B cell (primary cell): ENCODE measurements at regions of chr3 and their contacts with region 1.

Region 1: DNA sequence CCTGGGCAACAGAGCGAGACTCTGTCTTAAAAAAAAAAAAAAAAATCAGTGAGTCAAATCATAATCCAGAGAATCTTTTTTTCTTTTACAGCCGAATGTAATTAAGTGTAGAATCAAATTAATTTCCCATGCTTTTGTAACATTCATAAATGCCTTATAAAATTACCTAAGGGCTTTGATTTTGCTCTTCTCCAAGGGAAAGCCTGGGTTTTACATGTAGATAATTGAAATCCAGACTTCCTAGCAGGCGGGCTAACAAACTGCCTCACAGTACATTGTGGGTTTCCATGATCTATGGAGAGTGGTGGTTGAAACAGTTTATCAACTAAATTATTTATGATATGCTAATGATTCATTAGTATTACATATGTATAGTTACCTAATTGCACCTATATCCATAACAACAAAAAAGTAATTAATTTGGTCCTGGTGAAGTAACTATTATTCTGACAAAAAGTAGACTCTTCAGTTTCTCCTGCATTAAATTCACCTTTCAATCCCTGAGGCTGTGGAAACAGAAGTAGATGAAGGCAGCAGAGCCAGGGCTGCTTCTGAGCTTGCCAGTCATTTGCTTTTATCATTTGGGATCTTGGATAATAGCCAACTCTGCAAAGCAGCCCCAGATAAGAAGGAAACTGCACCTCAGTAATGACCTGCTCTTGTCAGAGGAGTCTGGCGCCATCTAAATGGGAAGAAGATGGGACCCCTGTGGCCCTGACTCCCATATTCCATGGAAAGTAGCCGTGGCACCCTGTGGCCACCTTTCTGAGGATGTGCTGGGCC is 9.5 kb downstream of the CCR9 start:
- DNase-seq: no peak
- ATAC-seq: no peak
- H3K4me3 ChIP-seq: no peak overlapping the region
- H3K4me3 Mint-ChIP-seq: no peak overlapping the region
- H3K27ac ChIP-seq: no peak overlapping the region
- H3K27ac Mint-ChIP-seq: no peak overlapping the region
- H3K4me1 ChIP-seq: peaks cover 26 to 28% of the 10 kb centered on the region in 2 donors
- H3K4me1 Mint-ChIP-seq: peaks cover 40% of the 10 kb centered on the region
- H3K27me3 ChIP-seq: no peaks in the 10 kb centered on the region
- H3K27me3 Mint-ChIP-seq: no peaks in the 10 kb centered on the region
- CTCF ChIP-seq: no peak

Region 2: DNA sequence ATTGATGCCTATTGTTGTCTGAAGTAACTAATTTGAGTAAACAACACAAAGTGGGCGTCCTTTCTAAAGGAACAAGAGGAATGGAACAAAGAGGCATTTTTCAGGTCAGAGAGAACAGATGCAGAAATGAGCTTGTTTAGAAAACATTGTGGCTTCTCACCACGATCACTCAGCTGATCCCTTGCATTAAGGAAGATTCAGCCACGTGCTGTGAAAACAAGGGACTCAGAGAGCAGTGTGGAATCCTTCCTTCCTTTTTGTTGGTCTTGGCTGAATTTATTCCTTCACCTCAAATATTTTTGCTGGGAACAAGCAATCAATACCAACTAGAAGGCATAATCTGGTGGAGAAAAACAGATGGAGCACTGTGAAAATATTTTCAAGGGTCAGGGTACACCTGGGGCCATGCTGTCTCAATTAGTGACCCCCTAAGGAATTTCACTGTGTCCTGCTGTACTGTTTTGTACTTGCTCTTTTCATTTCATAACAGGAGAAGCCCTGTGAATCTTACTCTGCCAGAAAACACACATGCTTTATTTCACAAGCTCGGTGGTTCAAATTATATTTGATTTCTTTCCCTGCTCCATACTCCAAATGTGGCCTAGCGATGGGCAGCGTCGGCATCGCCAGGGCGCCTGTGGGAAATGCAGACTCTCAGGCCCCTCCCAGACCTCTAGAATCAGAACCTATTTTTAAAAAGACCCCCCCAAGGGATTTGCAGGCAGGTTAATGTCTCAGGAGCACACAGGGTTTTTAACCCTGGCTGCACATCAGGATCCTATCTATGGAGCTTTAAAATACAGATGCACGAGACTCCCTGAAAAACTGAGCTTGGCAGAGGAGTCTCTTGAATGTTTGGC is 88.0 kb before region 1 on chr3:
- CTCF ChIA-PET with region 1: no interaction called
- POLR2A ChIA-PET with region 1: no interaction called
- intact Hi-C with region 1: no loop called
- DNase-seq: no peak
- ATAC-seq: no peak
- H3K4me3 ChIP-seq: no peak overlapping the region
- H3K4me3 Mint-ChIP-seq: no peak overlapping the region
- H3K27ac ChIP-seq: no peak overlapping the region
- H3K27ac Mint-ChIP-seq: no peak overlapping the region
- H3K4me1 ChIP-seq: no peaks in the 10 kb centered on the region
- H3K4me1 Mint-ChIP-seq: no peaks in the 10 kb centered on the region
- H3K27me3 ChIP-seq: no peaks in the 10 kb centered on the region
- H3K27me3 Mint-ChIP-seq: no peaks in the 10 kb centered on the region
- CTCF ChIP-seq: no peak

Region 3: GRCh38 chr3:45906681-45907407 is 11.0 kb after region 1 on chr3:
- CTCF ChIA-PET with region 1: interaction called, 13 read pairs
- POLR2A ChIA-PET with region 1: no interaction called
- intact Hi-C with region 1: no loop called
- DNase-seq: no peak
- ATAC-seq: no peak
- H3K4me3 ChIP-seq: no peak overlapping the region
- H3K4me3 Mint-ChIP-seq: peak overlapping the region; percentile 42
- H3K27ac ChIP-seq: no peak overlapping the region
- H3K27ac Mint-ChIP-seq: peak overlapping the region; percentile 80
- H3K4me1 ChIP-seq: peaks cover 16 to 46% of the 10 kb centered on the region in 2 donors
- H3K4me1 Mint-ChIP-seq: peaks cover 53% of the 10 kb centered on the region
- H3K27me3 ChIP-seq: no peaks in the 10 kb centered on the region
- H3K27me3 Mint-ChIP-seq: no peaks in the 10 kb centered on the region
- CTCF ChIP-seq: no peak

Region 4: GRCh38 chr3:47250309-47251060 is 1354.6 kb after region 1 on chr3:
- CTCF ChIA-PET with region 1: no interaction called
- POLR2A ChIA-PET with region 1: no interaction called
- intact Hi-C with region 1: no loop called
- DNase-seq: no peak
- ATAC-seq: no peak
- H3K4me3 ChIP-seq: no peak overlapping the region
- H3K4me3 Mint-ChIP-seq: no peak overlapping the region
- H3K27ac ChIP-seq: no peak overlapping the region
- H3K27ac Mint-ChIP-seq: no peak overlapping the region
- H3K4me1 ChIP-seq: no peaks in the 10 kb centered on the region
- H3K4me1 Mint-ChIP-seq: no peaks in the 10 kb centered on the region
- H3K27me3 ChIP-seq: no peaks in the 10 kb centered on the region
- H3K27me3 Mint-ChIP-seq: no peaks in the 10 kb centered on the region
- CTCF ChIP-seq: no peak